ENCODE measurements at regions of chr7 and their contacts with region 1.

Region 1: GRCh38 chr7:98841179-98841997 is 28.4 kb downstream of the TMEM130 start:
- DNase-seq: peak; percentile 72
- H3K4me3 Mint-ChIP-seq: no peak overlapping the region
- H3K27ac Mint-ChIP-seq: no peak overlapping the region
- H3K4me1 Mint-ChIP-seq: no peaks in the 10 kb centered on the region
- H3K27me3 Mint-ChIP-seq: peaks cover 13% of the 10 kb centered on the region
- CTCF ChIP-seq: peak; percentile 85

Region 2: GRCh38 chr7:98294796-98295382 is 546.5 kb before region 1 on chr7:
- CTCF ChIA-PET with region 1: no interaction called
- intact Hi-C with region 1: loop called (anchors 5 kb)
- DNase-seq: peak; percentile 68
- H3K4me3 Mint-ChIP-seq: no peak overlapping the region
- H3K27ac Mint-ChIP-seq: no peak overlapping the region
- H3K4me1 Mint-ChIP-seq: no peaks in the 10 kb centered on the region
- H3K27me3 Mint-ChIP-seq: no peaks in the 10 kb centered on the region
- CTCF ChIP-seq: peak; percentile 60

Region 3: DNA sequence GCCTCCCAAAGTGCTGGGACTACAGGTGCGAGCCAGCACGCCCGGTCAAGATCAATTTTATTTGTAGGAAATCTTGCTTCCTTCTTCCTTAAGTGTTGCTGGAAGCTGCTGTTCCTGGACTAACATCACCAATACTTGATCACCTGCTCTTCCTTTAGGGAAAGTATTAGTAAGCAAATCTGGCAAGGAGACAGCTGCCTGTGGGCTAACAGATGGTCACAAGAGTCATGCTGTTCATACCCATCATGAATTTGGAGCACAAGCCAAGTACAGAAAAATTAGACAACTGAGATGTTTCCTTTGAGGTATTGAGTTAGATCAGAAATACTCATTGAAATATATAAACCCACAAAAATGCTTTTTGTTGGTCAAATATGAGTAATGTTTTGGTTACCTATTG is 468.4 kb before region 1 on chr7:
- CTCF ChIA-PET with region 1: no interaction called
- intact Hi-C with region 1: no loop called
- DNase-seq: no peak
- H3K4me3 Mint-ChIP-seq: no peak overlapping the region
- H3K27ac Mint-ChIP-seq: peak overlapping the region; percentile 74
- H3K4me1 Mint-ChIP-seq: peaks cover 8% of the 10 kb centered on the region
- H3K27me3 Mint-ChIP-seq: no peaks in the 10 kb centered on the region
- CTCF ChIP-seq: no peak

Region 4: GRCh38 chr7:98755128-98755898 is 86.1 kb before region 1 on chr7:
- CTCF ChIA-PET with region 1: interaction called, 3 read pairs
- intact Hi-C with region 1: loop called (anchors 5 kb)
- DNase-seq: peak; percentile 29
- H3K4me3 Mint-ChIP-seq: no peak overlapping the region
- H3K27ac Mint-ChIP-seq: no peak overlapping the region
- H3K4me1 Mint-ChIP-seq: no peaks in the 10 kb centered on the region
- H3K27me3 Mint-ChIP-seq: peaks cover 29% of the 10 kb centered on the region
- CTCF ChIP-seq: no peak